T-cell (primary cell): ENCODE measurements at regions of chr17 and their contacts with region 1.

Region 1: DNA sequence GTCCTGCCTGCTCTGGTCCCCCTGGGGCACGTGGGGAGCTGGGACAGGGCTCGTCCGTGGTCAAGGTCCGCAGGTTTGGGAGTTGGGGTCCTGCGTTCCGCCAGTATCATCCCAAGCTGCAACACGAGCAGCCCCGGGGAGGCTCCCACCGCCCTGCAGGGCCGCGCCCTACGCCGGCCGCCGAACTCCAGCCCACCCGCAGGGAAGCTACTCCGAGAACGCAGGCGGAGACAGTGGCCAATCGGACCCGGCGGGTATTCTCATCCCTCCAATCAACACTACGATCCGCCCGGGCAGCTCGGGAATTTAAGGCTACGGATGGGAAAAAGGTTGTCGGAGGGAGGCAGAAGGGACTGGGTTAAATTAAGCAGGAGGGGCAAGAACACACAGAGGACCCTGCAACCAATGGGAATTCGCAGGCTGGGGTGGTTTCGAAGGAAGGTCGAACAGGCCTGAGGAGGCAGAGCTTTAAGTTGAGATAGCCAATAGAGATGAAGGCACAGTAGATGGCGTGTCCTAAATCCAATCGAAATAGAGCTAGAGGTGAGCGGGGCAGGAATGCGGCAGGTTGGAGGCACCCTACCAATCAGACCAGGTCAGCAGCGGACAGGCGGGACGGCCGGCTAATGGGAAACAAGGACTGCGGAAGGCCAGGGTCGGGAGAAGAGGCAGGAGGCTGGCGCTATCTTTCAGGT is 626 bp downstream of the SPAG7 start:
- DNase-seq: peak in 33 of 35 experiments; percentile 83 to 97 (median 88)
- ATAC-seq: peak; percentile 85 to 87 (median 86)
- H3K4me3 ChIP-seq: peak overlapping the region; percentile 74 to 81
- H3K4me3 Mint-ChIP-seq: no peak overlapping the region
- H3K27ac ChIP-seq: peak overlapping the region; percentile 70
- H3K27ac Mint-ChIP-seq: no peak overlapping the region
- H3K4me1 ChIP-seq: peaks cover 5 to 36% of the 10 kb centered on the region in 2 experiments
- H3K4me1 Mint-ChIP-seq: peaks cover 14 to 32% (median 23%) of the 10 kb centered on the region in 3 donors
- H3K27me3 ChIP-seq: no peaks in the 10 kb centered on the region
- H3K27me3 Mint-ChIP-seq: no peaks in the 10 kb centered on the region

Region 2: GRCh38 chr17:4908301-4908700 is 58.7 kb before region 1 on chr17:
- CTCF ChIA-PET with region 1: interaction called in 1 of 2 experiments, 15 read pairs
- POLR2A ChIA-PET with region 1: interaction called in 1 of 2 experiments, 4 read pairs
- DNase-seq: no peak
- ATAC-seq: peak; percentile 24 to 58 (median 41)
- H3K4me3 ChIP-seq: no peak overlapping the region
- H3K4me3 Mint-ChIP-seq: no peak overlapping the region
- H3K27ac ChIP-seq: no peak overlapping the region
- H3K27ac Mint-ChIP-seq: no peak overlapping the region
- H3K4me1 ChIP-seq: peaks cover 8 to 29% of the 10 kb centered on the region in 2 experiments
- H3K4me1 Mint-ChIP-seq: peaks cover 4 to 6% (median 4%) of the 10 kb centered on the region in 3 donors
- H3K27me3 ChIP-seq: no peaks in the 10 kb centered on the region
- H3K27me3 Mint-ChIP-seq: no peaks in the 10 kb centered on the region

Region 3: GRCh38 chr17:4939796-4940624 is 27.0 kb before region 1 on chr17 and contains the starts of genes RNF167 and SLC25A11:
- CTCF ChIA-PET with region 1: interaction called in 1 of 2 experiments, 19 read pairs
- POLR2A ChIA-PET with region 1: interaction called in 1 of 2 experiments, 8 read pairs
- DNase-seq: peak; percentile 87 to 99 (median 95)
- ATAC-seq: peak; percentile 81 to 88 (median 84)
- H3K4me3 ChIP-seq: peak within 1 kb of the TSS; percentile 85 to 99
- H3K4me3 Mint-ChIP-seq: peak within 1 kb of the TSS; percentile 91 to 100 (median 94)
- H3K27ac ChIP-seq: peak within 1 kb of the TSS; percentile 77
- H3K27ac Mint-ChIP-seq: peak within 1 kb of the TSS; percentile 96 to 97
- H3K4me1 ChIP-seq: peaks cover 31 to 61% of the 10 kb centered on the region in 2 experiments
- H3K4me1 Mint-ChIP-seq: peaks cover 64 to 73% (median 64%) of the 10 kb centered on the region in 3 donors
- H3K27me3 ChIP-seq: no peaks in the 10 kb centered on the region
- H3K27me3 Mint-ChIP-seq: no peaks in the 10 kb centered on the region
- total RNA-seq, gene RNF167: 109 to 158 (median 135) TPM
- total RNA-seq, gene SLC25A11: 30.9 to 51.6 (median 47.0) TPM

Region 4: GRCh38 chr17:5164436-5164835 is 197.4 kb after region 1 on chr17:
- CTCF ChIA-PET with region 1: no interaction called
- POLR2A ChIA-PET with region 1: no interaction called
- DNase-seq: no peak
- ATAC-seq: no peak
- H3K4me3 ChIP-seq: no peak overlapping the region
- H3K4me3 Mint-ChIP-seq: no peak overlapping the region
- H3K27ac ChIP-seq: no peak overlapping the region
- H3K27ac Mint-ChIP-seq: no peak overlapping the region
- H3K4me1 ChIP-seq: no peaks in the 10 kb centered on the region
- H3K4me1 Mint-ChIP-seq: peaks cover 0 to 2% (median 0%) of the 10 kb centered on the region in 3 donors
- H3K27me3 ChIP-seq: no peaks in the 10 kb centered on the region
- H3K27me3 Mint-ChIP-seq: peaks cover 4 to 8% of the 10 kb centered on the region in 2 donors